Sciatic nerve (tissue), 2 donors: ENCODE measurements at regions of chr18 and their contacts with region 1.

Region 1: GRCh38 chr18:11047156-11047555 is 102.2 kb downstream of the PIEZO2 start:
- DNase-seq: no peak
- ATAC-seq: no peak

Region 2: DNA sequence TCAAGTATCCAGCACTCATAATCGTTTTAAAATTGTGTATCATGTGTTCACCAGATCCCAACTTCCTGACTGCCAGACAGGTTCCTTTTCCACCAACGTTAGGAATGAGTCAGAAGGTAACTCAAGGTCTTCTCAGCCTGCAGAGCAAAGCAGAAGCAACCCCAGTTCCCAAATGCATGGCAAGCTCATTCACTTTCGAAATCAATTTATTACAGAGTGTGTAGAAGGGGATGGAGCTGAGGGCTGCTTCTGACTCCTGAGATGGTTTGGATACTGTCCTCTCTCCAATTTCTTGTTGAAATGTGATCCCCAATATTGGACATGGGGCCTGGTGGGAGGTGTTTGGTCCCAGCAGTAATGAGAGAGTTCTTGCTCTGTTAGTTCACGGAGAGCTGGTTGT is 12.3 kb before region 1 on chr18:
- intact Hi-C with region 1: loop called (anchors 1 kb)
- DNase-seq: no peak
- ATAC-seq: peak; percentile 63